Activated CD4-positive, alpha-beta T cell treated with anti-CD3 and anti-CD28 coated beads for 36 hours (primary cell): ENCODE measurements at regions of chr16 and their contacts with region 1.

Region 1: GRCh38 chr16:66650707-66651473 is 45.7 kb downstream of the CMTM4 start:
- DNase-seq: peak; percentile 89
- ATAC-seq: peak; percentile 100
- H3K4me3 Mint-ChIP-seq: peak overlapping the region; percentile 18
- H3K27ac Mint-ChIP-seq: peak overlapping the region; percentile 26
- H3K4me1 Mint-ChIP-seq: peaks cover 10% of the 10 kb centered on the region
- H3K27me3 Mint-ChIP-seq: no peaks in the 10 kb centered on the region

Region 2: GRCh38 chr16:66220702-66221101 is 430.2 kb before region 1 on chr16:
- CTCF ChIA-PET with region 1: no interaction called
- POLR2A ChIA-PET with region 1: no interaction called
- intact Hi-C with region 1: no loop called
- DNase-seq: no peak
- ATAC-seq: no peak
- H3K4me3 Mint-ChIP-seq: no peak overlapping the region
- H3K27ac Mint-ChIP-seq: no peak overlapping the region
- H3K4me1 Mint-ChIP-seq: no peaks in the 10 kb centered on the region
- H3K27me3 Mint-ChIP-seq: peaks cover 7% of the 10 kb centered on the region

Region 3: GRCh38 chr16:66639091-66639885 is 11.6 kb before region 1 on chr16:
- CTCF ChIA-PET with region 1: interaction called, 25 read pairs
- POLR2A ChIA-PET with region 1: no interaction called
- intact Hi-C with region 1: no loop called
- DNase-seq: no peak
- ATAC-seq: no peak
- H3K4me3 Mint-ChIP-seq: no peak overlapping the region
- H3K27ac Mint-ChIP-seq: no peak overlapping the region
- H3K4me1 Mint-ChIP-seq: no peaks in the 10 kb centered on the region
- H3K27me3 Mint-ChIP-seq: no peaks in the 10 kb centered on the region